GM23248 (cell line): ENCODE measurements at regions of chr5 and their contacts with region 1.

Region 1: DNA sequence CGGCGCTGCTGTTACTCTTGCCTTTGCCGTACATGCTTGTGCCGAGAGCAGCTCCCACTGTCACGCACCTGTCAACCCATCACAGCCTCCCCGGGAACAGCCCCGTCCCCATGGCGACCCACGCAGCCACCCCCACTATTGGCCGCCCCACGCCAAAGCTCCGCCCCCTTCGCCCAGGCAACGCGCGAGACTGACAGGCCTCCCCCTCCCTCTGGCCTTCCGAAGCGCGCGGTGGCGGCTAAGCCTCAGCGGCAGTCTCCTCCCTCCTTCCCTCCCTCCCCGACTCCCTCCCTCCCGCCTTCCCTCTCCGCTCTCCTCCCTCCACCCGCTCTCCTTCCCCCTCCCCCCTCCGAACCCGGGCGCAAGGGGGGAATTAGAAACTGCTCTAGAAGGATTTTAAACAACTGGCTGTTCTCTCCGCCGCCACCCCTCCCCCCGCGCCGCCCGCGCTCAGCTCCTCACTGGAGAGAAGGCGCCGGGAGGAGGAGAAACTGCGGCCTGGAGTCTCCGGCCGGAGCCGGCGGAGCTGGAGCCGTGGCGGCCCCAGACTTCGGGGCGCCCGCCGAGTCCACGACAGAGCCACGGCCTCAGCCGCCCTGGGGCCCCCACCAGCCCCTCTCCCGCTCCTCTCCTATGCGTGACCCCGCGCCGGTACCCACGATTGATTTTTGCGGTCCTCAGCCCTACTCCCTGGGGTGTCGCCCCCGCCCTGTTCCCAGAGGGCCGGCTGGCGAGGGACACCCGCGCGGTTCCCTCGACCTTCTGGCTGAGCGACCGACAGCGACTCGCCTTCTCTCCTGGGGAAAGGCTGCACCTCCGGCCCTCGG is at the start of gene SSBP2:
- DNase-seq: peak; percentile 99
- H3K4me3 ChIP-seq: peak within 1 kb of the TSS; percentile 84
- H3K27ac ChIP-seq: peak within 1 kb of the TSS; percentile 98
- H3K4me1 ChIP-seq: peaks cover 23% of the 10 kb centered on the region
- H3K27me3 ChIP-seq: no peaks in the 10 kb centered on the region
- total RNA-seq, gene SSBP2: 22.0 and 25.5 TPM in 2 replicates

Region 2: GRCh38 chr5:81838307-81838906 is 87.2 kb after region 1 on chr5:
- in situ Hi-C with region 1: loop called (anchors 5 kb)
- DNase-seq: peak; percentile 64
- H3K4me3 ChIP-seq: no peak overlapping the region
- H3K27ac ChIP-seq: no peak overlapping the region
- H3K4me1 ChIP-seq: peaks cover 7% of the 10 kb centered on the region; the same call in 1 of the 2 replicates
- H3K27me3 ChIP-seq: no peaks in the 10 kb centered on the region

Region 3: DNA sequence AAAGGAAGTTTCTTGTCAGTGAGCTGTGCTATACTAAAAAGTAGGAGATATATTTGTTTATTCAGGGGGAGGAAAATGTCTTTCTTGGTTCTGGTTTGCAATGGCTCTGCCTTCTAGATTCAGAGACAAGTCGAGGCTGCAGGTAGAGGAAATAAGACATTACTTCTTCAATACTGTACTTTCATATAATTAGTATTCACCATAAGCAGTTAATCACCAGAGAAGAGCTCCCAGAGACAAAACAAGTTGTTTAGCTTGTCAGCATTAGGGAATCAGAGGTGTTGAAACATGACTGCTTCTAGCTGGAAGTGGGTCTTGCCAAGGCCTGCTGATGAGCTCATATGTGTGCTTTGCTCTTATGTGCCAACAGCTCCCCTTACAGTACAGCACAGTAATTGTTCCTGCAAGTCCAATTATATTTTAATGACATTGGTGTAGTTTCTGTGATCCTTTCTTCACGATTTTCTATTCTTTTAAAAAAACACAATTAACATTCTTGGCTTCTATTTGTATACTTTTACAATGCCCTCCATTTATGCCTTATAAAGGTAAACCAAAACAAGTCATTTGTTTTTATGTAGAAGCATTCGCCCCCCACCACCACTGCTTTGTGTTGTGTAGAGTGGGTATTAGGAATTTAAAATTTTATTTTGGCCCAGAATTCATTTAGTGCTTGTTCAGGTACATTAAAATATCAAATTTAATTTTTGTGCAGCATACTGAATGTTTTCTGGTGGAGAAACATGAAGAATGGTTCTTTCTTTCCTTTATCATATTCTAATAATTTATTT is 414.7 kb after region 1 on chr5:
- in situ Hi-C with region 1: loop called (anchors 25 kb)
- DNase-seq: peak; percentile 97
- H3K4me3 ChIP-seq: no peak overlapping the region
- H3K27ac ChIP-seq: peak overlapping the region; percentile 70
- H3K4me1 ChIP-seq: peaks cover 37% of the 10 kb centered on the region
- H3K27me3 ChIP-seq: no peaks in the 10 kb centered on the region